ENCODE measurements at regions of chr2 and their contacts with region 1.

Region 1: DNA sequence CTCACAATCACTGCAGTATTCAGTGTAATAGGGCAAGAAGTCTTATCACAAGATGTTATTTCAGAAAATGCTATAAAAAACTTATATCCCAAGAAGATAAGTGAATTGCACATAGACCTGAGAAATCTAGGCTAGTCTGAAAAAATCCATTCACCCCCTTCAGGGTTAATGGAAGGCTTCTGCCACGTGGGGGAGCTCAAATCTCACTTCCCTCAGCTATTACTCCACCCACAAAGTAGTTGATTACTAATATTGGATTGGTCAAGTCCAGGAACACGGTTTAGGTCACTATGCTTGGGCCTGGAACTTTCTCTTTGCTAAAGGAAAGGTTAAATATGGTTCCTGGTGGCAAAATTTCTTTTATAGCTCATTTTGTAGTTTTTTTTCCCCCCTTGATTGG is 51.2 kb upstream of the ADAM23 start:
- DNase-seq: no peak
- ATAC-seq: peak in 1 of 2 donors; percentile 50

Region 2: DNA sequence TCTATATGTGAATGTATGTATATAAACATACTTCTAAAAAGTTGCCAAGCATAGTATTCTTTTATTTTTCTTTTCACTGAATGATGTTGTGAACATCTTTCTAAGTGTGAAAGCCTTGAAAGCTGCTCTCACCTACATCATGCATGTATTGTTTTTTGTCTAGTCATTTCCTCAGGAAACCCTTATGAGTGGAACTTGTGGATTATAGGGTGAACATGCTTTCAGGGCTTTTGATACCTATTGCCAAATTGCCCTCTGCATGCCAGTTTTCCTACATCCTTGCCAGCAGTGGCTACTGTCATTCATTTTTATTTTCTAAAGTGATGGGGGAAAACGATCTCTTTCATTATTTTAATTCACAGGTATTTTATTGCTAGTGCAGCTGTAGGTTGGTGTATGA is 129.5 kb after region 1 on chr2:
- intact Hi-C with region 1: loop called in 1 of 2 experiments (anchors 10 kb)
- DNase-seq: no peak
- ATAC-seq: no peak

Region 3: DNA sequence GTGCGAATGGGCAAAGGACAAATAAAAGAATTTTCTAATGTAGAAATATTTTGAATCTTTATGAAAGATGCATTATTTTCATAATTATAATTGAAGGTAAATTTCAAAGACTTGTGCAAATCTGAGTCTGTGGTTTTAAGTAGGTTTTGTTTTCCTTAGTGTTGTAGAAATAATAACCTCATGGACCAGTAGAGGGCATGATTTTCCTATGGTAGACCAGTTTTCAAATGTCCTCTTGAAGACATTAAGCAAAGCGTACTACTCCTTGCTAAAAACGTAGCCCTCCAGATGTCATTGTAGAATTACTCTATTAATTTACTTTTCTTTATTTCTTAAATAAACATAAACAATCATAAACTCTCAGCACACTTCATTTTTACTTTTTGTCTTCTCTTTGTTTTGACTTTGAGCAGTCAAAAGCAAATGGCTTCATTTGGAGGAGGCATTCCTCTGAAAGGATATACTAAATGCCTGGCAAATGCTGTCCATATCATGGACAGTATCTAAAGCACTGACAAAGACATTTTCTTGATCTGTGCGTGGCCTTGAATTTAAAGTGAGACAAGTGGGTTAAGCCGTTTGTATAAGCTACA is 164.3 kb after region 1 on chr2:
- intact Hi-C with region 1: loop called in 1 of 2 experiments (anchors 2 kb)
- DNase-seq: no peak
- ATAC-seq: no peak

Region 4: GRCh38 chr2:206683546-206683945 is 291.4 kb after region 1 on chr2:
- intact Hi-C with region 1: no loop called
- DNase-seq: no peak
- ATAC-seq: no peak

Measured in left cardiac atrium (tissue), 4 donors.